K562 (cell line): ENCODE measurements at regions of chr5 and their contacts with region 1.

Region 1: DNA sequence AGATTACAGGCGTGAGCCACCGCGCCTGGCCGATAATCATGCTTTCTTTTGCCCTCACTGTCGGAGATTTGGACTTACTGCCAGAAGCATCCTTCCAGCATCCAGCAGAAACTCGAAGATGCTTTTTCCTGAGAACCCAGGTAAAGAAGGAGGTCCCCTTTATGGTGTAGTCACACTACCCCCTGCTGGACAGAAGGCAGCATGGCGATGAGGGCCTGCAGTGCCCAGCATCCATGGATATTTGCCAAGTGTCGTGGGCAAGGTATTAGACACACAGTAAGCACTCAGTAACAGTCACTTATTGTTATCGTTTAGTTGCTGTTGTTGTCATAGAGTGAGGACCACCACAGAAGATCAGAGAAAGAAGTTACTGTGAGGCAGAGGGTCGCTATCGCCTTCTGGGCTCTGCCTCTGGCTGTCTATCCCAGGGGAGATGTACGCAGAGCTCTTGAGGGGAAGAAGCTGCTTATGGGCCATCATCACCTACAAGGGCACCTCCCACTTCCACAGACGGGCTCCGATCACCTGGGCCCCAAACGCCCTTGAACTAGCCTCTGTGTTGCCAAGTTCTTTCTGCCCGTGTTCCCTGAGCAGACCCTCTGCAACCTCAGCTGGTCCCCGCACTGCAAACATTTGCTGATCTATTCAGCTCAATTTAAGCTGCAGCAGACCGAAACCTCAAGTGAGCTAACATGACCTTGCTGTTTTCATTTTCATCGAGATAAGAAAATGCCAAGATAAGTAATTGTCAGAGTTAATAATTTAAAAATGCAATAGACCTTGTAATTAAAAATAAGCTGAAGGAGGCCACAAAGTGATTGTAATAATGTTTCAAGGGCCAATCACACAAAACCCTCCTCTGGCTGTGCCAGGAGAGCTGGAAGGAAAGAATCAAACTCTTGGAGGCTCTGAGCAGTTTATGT is 23.9 kb downstream of the C5orf15 start:
- DNase-seq: peak; percentile 79 to 83 (median 79)
- ATAC-seq: peak; percentile 85
- H3K4me3 ChIP-seq: no peak overlapping the region
- H3K27ac ChIP-seq: no peak overlapping the region
- H3K4me1 ChIP-seq: peaks cover 18 to 23% of the 10 kb centered on the region in 2 experiments; a peak in 4 of 5 replicates
- H3K27me3 ChIP-seq: no peaks in the 10 kb centered on the region
- CTCF ChIP-seq: peak; percentile 81 to 94 (median 93)
- EP300 ChIP-seq: no peak
- POLR2A ChIP-seq: no peak
- RAD21 ChIP-seq: peak; percentile 94 to 97

Region 2: GRCh38 chr5:133423618-133424282 is 520.8 kb before region 1 on chr5:
- CTCF ChIA-PET with region 1: no interaction called
- POLR2A ChIA-PET with region 1: no interaction called
- in situ Hi-C with region 1: loop called (anchors 10 kb)
- intact Hi-C with region 1: loop called (anchors 5 kb)
- DNase-seq: peak; percentile 68 to 89 (median 84)
- ATAC-seq: peak; percentile 98
- H3K4me3 ChIP-seq: no peak overlapping the region
- H3K27ac ChIP-seq: no peak overlapping the region
- H3K4me1 ChIP-seq: peaks cover 0 to 6% of the 10 kb centered on the region in 2 experiments; a peak in 2 of 5 replicates
- H3K27me3 ChIP-seq: peaks cover 9 to 56% of the 10 kb centered on the region in 2 experiments; a peak in 4 of 5 replicates
- CTCF ChIP-seq: peak; percentile 85 to 95 (median 88)
- EP300 ChIP-seq: no peak
- POLR2A ChIP-seq: no peak
- RAD21 ChIP-seq: peak; percentile 72 to 80

Region 3: GRCh38 chr5:133552931-133553525 is 391.5 kb before region 1 on chr5:
- CTCF ChIA-PET with region 1: interaction called, 3 read pairs
- POLR2A ChIA-PET with region 1: no interaction called
- in situ Hi-C with region 1: no loop called
- intact Hi-C with region 1: loop called (anchors 1 kb)
- DNase-seq: peak; percentile 63 to 78 (median 72)
- ATAC-seq: peak; percentile 98
- H3K4me3 ChIP-seq: no peak overlapping the region
- H3K27ac ChIP-seq: no peak overlapping the region
- H3K4me1 ChIP-seq: no peaks in the 10 kb centered on the region
- H3K27me3 ChIP-seq: peaks cover 5 to 15% of the 10 kb centered on the region in 2 experiments; a peak in 3 of 5 replicates
- CTCF ChIP-seq: peak; percentile 74 to 88 (median 79)
- EP300 ChIP-seq: no peak
- POLR2A ChIP-seq: no peak
- RAD21 ChIP-seq: peak; percentile 26 to 57

Region 4: GRCh38 chr5:133754575-133755169 is 189.9 kb before region 1 on chr5:
- CTCF ChIA-PET with region 1: no interaction called
- POLR2A ChIA-PET with region 1: no interaction called
- in situ Hi-C with region 1: no loop called
- intact Hi-C with region 1: loop called (anchors 5 kb)
- DNase-seq: peak; percentile 30 to 48 (median 38)
- ATAC-seq: peak; percentile 95
- H3K4me3 ChIP-seq: no peak overlapping the region
- H3K27ac ChIP-seq: no peak overlapping the region
- H3K4me1 ChIP-seq: no peaks in the 10 kb centered on the region
- H3K27me3 ChIP-seq: peaks cover 0 to 6% of the 10 kb centered on the region in 2 experiments; a peak in 3 of 5 replicates
- CTCF ChIP-seq: peak; percentile 66 to 77 (median 72)
- EP300 ChIP-seq: no peak
- POLR2A ChIP-seq: no peak
- RAD21 ChIP-seq: peak; percentile 31 to 59; a peak in 3 of 4 replicates

Region 5: DNA sequence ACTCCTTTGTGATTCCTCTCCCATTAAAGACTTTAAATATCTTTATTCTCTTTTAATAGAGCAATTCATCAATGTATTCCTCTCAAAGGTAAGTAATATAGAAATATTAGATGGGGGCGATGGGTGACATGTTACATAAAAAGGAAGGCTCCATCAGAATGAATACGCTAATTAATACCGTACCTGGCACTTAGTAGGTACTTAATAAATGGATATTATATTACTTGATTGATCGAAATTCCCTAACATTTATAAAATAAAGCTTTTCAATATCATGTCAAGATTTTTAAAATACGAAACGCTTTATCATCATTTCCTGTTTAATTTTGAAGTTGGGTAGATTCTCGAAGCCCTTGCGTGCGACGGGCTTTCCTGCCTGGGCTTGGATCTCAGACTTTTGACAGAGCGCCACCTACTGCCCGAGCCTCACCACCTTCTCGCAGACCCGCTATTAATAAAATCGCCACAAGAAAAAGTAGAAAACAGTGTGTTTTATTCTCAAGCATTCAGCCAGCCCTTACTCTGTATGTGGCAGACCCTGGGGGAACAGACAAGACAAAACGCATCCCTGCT is 75.5 kb before region 1 on chr5:
- CTCF ChIA-PET with region 1: interaction called, 3 read pairs
- POLR2A ChIA-PET with region 1: no interaction called
- in situ Hi-C with region 1: no loop called
- intact Hi-C with region 1: loop called (anchors 5 kb)
- DNase-seq: peak; percentile 71 to 77 (median 76)
- ATAC-seq: peak; percentile 90
- H3K4me3 ChIP-seq: no peak overlapping the region
- H3K27ac ChIP-seq: no peak overlapping the region
- H3K4me1 ChIP-seq: peaks cover 3 to 4% of the 10 kb centered on the region in 2 experiments; a peak in 2 of 5 replicates
- H3K27me3 ChIP-seq: peaks cover 7 to 38% of the 10 kb centered on the region in 2 experiments; a peak in 4 of 5 replicates
- CTCF ChIP-seq: peak; percentile 84 to 88 (median 86)
- EP300 ChIP-seq: no peak
- POLR2A ChIP-seq: no peak
- RAD21 ChIP-seq: peak; percentile 62 to 72

Region 6: DNA sequence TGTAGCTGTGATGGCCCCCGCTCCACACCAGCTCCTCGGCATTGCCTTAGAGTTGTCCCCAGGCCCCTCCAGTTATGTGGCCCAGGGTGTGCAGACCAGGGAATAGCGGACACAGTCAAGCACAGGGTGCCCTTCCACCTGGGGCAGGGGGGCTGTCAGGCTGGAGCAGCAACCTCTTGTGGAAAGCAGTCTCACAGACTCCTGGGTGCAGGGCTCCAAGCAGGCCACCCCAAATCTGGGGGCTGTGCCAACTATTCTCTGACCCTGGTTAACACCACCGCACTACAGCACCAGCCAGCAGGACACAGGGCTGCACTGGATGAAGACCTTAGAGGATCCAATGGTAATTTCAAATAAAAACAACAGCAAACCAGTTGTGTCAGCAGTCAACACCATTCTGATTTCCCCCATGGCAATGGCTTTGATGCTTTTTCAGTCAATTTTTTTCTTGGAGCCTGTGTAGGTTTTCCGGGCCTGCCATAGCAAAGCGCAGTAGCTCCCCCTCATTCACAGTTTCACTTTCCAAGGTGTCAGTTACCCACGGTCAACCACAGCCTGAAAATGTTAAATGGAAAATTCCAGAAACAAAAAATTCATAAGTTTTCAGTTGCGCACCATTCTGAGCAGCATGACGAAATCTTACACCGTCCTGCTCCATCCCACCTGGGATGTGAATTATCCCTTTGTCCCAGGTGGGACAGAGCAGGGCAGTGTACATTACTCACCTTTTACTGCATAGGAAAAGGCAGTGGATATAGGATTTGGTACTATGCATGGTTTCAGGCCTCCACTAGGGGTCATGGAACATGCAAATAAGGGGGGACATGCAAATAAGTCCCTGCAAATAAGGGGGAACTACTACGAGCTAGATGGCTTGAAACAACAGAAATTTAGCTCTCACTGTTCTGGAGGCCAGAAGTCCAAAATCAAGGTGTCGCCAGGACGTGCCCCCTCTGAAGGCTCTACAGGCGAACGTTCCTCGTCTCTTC is 25.1 kb before region 1 on chr5:
- CTCF ChIA-PET with region 1: no interaction called
- POLR2A ChIA-PET with region 1: no interaction called
- in situ Hi-C with region 1: no loop called
- intact Hi-C with region 1: no loop called
- DNase-seq: no peak
- ATAC-seq: peak; percentile 60
- H3K4me3 ChIP-seq: no peak overlapping the region
- H3K27ac ChIP-seq: no peak overlapping the region
- H3K4me1 ChIP-seq: peaks cover 3 to 10% of the 10 kb centered on the region in 2 experiments; a peak in 2 of 5 replicates
- H3K27me3 ChIP-seq: no peaks in the 10 kb centered on the region
- CTCF ChIP-seq: peak in 2 of 3 experiments; percentile 24 to 44; a peak in 4 of 6 replicates
- EP300 ChIP-seq: no peak
- POLR2A ChIP-seq: no peak
- RAD21 ChIP-seq: peak in 1 of 2 experiments; percentile 18; a peak in 1 of 4 replicates